ENCODE measurements at regions of chr22 and their contacts with region 1.

Region 1: GRCh38 chr22:21712894-21713712 is 22.5 kb downstream of the YPEL1 start:
- DNase-seq: peak; percentile 59
- H3K4me3 ChIP-seq: no peak overlapping the region
- H3K27ac ChIP-seq: no peak overlapping the region
- H3K4me1 ChIP-seq: peaks cover 3% of the 10 kb centered on the region
- H3K27me3 ChIP-seq: no peaks in the 10 kb centered on the region
- CTCF ChIP-seq: peak; percentile 74 to 77

Region 2: DNA sequence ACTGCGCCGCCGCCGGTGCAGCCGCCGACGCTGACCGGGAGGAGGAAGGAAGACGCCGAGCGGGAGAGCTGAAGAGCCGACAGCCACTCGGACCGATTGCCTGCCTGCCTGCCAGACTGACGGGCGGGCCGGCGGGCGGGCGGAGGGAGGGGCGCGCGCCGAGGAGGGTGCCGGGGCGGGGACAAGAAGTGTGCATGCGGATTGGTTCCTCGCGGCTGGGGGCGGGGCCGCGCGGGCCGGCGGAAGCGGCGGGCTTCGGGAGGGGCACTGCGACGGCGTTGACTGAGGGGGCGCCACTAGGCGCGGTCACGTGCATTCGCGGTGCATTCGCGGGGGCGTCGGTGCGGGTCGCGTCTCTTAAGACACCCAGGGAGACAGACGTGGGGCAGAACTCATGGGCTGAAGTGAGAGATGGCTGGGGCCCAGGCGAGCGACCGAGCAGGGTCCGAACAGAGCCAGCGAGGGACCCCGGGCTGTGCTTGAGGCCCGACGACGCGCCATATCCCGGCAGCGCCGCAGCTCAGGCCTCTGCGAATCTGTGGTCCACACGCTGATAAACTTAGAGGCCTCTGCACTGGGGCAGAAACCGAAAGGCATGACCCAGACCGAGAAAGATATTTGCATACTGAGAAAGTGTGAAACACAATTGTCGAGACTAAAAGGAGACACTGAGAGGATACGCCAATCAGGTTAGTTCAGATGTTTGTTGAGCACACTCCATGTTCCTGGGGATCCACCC is 154.6 kb after region 1 on chr22 and contains the start of gene MAPK1:
- CTCF ChIA-PET with region 1: no interaction called
- dilution Hi-C with region 1: no loop called
- in situ Hi-C with region 1: no loop called
- intact Hi-C with region 1: loop called (anchors 1 kb)
- DNase-seq: peak; percentile 83
- H3K4me3 ChIP-seq: peak within 1 kb of the TSS; percentile 81 to 99 (median 88)
- H3K27ac ChIP-seq: peak within 1 kb of the TSS; percentile 86
- H3K4me1 ChIP-seq: peaks cover 25% of the 10 kb centered on the region
- H3K27me3 ChIP-seq: no peaks in the 10 kb centered on the region
- CTCF ChIP-seq: peak in 1 of 2 donors; percentile 38
- total RNA-seq, gene MAPK1: 106 to 147 TPM

Region 3: GRCh38 chr22:21947040-21948014 is 234.2 kb after region 1 on chr22:
- CTCF ChIA-PET with region 1: no interaction called
- dilution Hi-C with region 1: no loop called
- in situ Hi-C with region 1: loop called (anchors 5 kb)
- intact Hi-C with region 1: loop called (anchors 2 kb)
- DNase-seq: peak; percentile 57
- H3K4me3 ChIP-seq: no peak overlapping the region
- H3K27ac ChIP-seq: peak overlapping the region; percentile 68
- H3K4me1 ChIP-seq: peaks cover 47% of the 10 kb centered on the region
- H3K27me3 ChIP-seq: no peaks in the 10 kb centered on the region
- CTCF ChIP-seq: peak; percentile 62 to 69

Region 4: DNA sequence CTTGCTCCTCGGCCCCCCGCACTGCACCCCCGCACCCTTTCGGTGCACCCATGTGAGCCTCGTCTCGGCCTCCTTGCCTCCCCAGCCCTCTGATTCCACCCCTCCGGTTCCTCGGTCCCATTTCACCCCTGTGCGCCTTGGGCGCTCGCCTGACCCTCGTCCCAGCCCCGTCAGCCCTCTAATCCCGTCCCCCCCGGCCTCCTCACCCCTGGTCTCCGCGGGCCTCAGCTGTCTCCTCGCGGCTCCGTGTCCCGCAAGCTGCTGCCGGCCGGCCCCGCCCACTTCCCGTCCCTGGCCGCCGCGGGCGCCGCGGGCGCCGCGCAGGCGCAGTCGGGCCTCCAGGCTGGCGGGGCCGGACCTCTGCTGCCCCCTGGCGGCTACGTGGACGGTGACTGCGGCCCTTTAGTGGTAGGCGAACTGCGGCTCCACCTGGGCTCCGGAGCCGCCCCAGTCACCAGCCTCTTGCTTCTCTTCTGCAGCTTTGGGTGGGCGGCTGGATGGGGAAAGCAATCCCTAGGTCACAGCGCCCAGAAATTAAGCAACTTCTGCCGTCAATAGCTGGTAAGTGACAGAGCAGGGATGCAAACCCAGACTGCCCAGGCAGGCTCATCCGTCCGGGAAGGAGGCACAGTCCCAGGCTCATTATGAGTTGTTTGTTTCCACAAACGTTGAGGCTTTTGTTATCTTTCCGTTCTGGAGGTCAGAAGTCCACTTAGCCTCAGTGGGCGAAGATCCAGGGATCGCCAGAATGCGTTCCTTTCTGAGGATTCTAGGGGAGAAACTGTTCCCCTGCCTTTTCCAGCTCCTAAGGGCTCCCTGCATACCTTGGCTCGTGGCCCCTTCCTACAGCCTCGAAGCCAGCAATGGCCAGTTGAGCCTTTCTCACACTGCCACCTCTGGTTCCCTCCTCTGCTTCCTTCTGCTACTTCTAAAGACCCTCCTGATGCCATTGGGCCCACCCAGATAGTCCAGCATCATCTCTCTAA is 239.8 kb after region 1 on chr22 and contains the start of gene PPM1F:
- CTCF ChIA-PET with region 1: no interaction called
- dilution Hi-C with region 1: no loop called
- in situ Hi-C with region 1: loop called in 1 of 2 experiments (anchors 5 kb)
- intact Hi-C with region 1: loop called (anchors 2 kb)
- DNase-seq: peak; percentile 59
- H3K4me3 ChIP-seq: peak within 1 kb of the TSS; percentile 61 to 85 (median 84)
- H3K27ac ChIP-seq: no peak within 1 kb of the TSS
- H3K4me1 ChIP-seq: peaks cover 18% of the 10 kb centered on the region
- H3K27me3 ChIP-seq: no peaks in the 10 kb centered on the region
- CTCF ChIP-seq: peak; percentile 56 to 68
- total RNA-seq, gene PPM1F: 30.8 to 43.6 TPM